HEK293 (cell line): ENCODE measurements at regions of chr7 and their contacts with region 1.

Region 1: GRCh38 chr7:80392229-80393169 is 119.4 kb downstream of the GNAT3 start:
- H3K4me3 ChIP-seq: no peak overlapping the region
- H3K27ac ChIP-seq: no peak overlapping the region
- H3K4me1 ChIP-seq: peaks cover 2% of the 10 kb centered on the region; the same call in 1 of the 2 replicates
- CTCF ChIP-seq: no peak

Region 2: GRCh38 chr7:80060218-80060806 is 332.2 kb before region 1 on chr7:
- CTCF ChIA-PET with region 1: interaction called, 11 read pairs
- POLR2A ChIA-PET with region 1: no interaction called
- H3K4me3 ChIP-seq: no peak overlapping the region
- H3K27ac ChIP-seq: no peak overlapping the region
- H3K4me1 ChIP-seq: no peaks in the 10 kb centered on the region
- CTCF ChIP-seq: no peak